Right ventricle myocardium inferior (tissue), 1 donor: ENCODE measurements at regions of chr20 and their contacts with region 1.

Region 1: GRCh38 chr20:23235173-23236027 is 115.2 kb upstream of the NXT1 start:
- DNase-seq: peak; percentile 91
- ATAC-seq: peak; percentile 91

Region 2: DNA sequence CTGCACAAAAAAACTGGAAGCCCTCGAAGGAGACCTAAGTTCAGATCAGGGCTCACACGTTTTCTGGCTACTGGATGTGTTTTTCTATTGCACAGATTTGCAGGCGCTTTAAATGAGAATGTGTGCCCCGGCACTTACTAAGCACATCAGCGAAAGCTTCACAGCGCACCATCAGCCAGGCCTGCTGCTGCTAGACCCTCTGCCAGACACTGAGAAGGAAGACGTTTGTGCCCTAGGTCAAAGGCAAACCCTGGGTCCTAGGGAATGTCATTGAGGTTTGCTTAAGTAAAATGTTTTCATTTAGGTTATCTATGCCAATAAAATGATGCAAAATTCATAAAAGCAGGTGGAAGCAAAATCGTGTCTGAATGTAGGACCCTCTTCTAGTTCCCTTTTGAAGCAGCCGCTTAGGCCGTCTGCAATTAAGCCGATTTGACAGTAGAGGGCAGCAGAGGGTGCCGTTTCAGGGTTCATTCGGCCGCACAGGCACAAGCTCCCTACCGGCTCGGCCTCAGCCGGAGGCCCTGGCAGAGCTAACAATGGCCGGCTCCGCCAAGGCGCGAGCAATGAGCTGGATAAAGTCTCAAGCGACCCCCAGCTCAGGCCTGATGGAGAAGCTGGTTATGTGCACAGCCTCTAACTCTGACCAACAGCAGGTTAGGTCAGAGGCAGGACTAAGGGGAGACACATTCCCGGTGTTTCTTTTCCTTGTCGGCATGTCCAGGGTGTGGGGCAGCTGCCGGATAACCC is 543.9 kb before region 1 on chr20:
- intact Hi-C with region 1: loop called (anchors 2 kb)
- DNase-seq: peak; percentile 90
- ATAC-seq: peak; percentile 87

Region 3: DNA sequence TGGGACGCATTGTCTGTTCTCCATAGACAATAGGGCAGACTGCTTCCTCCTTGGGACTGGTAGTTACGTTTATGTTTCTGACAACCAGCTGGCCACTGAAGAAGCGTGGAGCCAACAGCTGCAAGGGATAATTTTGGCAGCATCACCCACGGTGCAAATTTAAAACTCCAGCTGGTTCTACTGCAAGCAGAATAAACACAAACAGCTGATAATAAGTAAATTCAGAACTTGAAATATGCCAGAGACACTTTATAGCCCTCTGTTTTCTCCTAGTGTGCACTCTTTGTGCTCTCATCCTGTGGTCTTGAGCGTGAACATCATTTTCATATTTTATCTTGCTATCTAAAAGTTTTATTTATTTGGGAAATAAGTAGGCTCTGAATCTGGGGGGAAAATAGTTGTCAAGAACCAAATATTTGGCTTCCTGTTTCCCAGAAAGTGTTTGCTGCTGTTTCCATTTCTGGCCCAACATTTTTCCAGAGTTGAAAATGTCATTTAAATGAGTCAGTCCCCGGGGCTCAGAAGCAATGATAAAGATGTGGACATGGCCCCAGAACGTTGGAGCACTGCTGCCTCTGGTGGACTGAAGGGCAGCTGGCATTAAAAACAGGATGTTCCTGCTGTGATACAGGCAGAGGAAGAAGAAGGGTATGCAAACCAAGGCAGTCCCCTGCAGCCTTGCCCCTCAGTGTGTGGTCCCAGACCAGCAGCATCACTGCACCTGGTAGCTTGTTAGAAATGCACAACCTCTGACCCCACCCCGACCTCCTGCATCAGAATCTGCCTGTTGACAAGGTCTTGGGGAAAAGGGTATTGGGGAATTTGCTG is 173.5 kb before region 1 on chr20:
- intact Hi-C with region 1: no loop called
- DNase-seq: no peak
- ATAC-seq: peak; percentile 88